ENCODE measurements at regions of chr12 and their contacts with region 1.

Region 1: GRCh38 chr12:126747530-126748149 is 1519.3 kb upstream of the TMEM132C start:
- DNase-seq: no peak

Region 2: DNA sequence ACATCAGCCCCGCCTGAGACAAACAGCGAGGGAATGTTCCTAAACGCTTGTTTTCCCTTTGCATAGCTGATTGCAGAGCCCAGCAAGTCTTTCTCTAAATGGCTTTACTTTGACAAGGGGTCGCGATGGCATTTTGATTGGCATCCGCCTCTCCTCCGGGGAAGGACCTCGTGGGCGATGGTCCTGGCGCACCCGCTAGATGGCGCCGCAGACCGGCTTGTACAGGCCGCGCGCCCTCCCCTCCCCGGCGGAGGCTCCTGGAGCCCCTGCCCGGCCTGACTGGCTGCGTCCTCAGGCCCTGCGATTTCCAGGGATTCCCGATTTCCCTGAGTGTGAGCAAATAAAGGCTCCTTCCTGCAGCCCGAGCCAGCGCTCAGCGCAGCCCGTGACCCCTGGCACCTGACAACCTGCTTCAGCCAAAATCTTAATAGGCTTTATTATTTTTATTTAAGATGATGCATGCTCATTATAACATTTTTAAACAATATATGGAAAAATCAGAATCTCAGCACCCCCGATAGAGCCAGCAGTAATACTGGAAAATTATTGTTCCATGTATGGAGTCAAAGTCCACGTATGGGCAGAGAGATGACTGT is 1214.1 kb before region 1 on chr12:
- intact Hi-C with region 1: loop called (anchors 5 kb)
- DNase-seq: no peak

Region 3: DNA sequence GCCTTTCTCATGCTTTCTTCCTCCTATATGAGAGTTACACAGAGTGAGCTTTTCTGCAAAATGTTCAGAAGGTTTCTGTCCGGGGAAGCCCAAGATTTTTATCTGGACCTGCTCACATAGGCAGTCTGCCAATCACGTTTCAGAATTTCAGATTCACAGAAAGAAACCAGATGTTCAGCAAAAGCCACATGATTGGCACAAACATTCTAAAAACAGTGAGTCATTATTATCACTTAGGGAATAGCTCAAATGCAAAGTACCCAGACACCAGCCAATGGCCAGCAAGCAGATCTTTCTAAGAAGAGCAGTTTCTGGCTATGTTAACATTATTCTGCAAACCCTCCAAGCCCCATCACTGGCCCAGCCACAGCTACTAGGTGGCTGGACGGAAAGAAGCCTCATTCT is 39.1 kb before region 1 on chr12:
- intact Hi-C with region 1: no loop called
- DNase-seq: no peak

Region 4: DNA sequence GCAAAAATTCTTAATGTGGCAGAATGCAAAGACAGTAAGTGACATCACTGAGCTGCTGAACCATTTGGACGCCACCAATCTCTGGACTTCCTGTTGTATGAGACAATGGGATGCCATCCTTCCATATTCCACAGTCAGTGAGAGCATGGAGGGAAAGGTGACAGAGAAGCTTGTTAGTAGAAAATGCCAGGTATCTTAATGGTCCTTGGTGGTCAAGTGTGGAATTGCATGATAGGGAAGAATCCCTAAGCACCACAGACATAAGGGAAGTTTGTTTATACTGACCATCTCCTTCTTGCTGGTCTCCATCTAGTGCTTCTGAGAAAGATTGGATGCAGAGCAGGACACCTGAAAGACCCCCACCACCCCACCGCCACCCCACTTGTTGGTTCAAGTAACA is 109.3 kb after region 1 on chr12:
- intact Hi-C with region 1: no loop called
- DNase-seq: no peak

Measured in cardiac septum (tissue), 1 donor.